ENCODE measurements at regions of chr10 and their contacts with region 1.

Region 1: DNA sequence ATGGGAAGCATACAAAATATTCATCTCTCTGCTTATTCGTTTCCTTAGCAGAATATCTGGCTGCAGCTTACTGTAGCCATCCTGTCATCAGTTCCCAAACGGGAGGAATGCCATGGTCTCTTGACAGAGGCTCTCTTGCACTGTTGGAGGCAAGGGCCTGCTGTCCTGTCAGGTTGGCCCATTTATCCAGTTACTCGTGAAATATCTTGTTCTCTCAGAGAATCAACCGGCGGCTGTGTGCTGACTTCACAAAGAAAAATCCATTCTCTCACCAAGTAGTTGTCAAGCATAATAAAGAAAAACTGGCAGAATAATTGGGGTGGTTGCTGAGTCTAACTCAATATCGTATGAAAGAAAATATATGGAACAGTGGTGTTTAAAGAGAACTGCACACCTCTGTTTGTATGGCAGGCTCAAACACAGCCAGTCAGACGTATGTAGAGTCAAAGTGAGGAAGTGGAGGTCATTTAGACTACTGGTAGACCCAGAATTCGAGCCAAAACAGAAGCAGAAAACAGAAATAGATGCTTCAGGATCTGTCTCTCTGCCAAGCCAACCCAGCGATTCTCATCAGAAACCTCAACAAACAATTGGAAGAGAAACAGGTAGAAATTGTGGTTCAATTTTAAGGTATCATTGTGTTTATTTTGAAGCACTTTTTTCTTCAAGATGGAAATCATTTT is 349.2 kb upstream of the PRKCQ start:
- DNase-seq: no peak
- H3K4me3 ChIP-seq: no peak overlapping the region
- H3K27ac ChIP-seq: no peak overlapping the region
- H3K4me1 ChIP-seq: no peaks in the 10 kb centered on the region
- H3K27me3 ChIP-seq: no peaks in the 10 kb centered on the region
- CTCF ChIP-seq: no peak
- POLR2A ChIP-seq: no peak

Region 2: GRCh38 chr10:6964543-6964942 is 35.3 kb after region 1 on chr10:
- intact Hi-C with region 1: loop called (anchors 2 kb)
- DNase-seq: no peak
- H3K4me3 ChIP-seq: no peak overlapping the region
- H3K27ac ChIP-seq: no peak overlapping the region
- H3K4me1 ChIP-seq: no peaks in the 10 kb centered on the region
- H3K27me3 ChIP-seq: no peaks in the 10 kb centered on the region
- CTCF ChIP-seq: no peak
- POLR2A ChIP-seq: no peak

Region 3: DNA sequence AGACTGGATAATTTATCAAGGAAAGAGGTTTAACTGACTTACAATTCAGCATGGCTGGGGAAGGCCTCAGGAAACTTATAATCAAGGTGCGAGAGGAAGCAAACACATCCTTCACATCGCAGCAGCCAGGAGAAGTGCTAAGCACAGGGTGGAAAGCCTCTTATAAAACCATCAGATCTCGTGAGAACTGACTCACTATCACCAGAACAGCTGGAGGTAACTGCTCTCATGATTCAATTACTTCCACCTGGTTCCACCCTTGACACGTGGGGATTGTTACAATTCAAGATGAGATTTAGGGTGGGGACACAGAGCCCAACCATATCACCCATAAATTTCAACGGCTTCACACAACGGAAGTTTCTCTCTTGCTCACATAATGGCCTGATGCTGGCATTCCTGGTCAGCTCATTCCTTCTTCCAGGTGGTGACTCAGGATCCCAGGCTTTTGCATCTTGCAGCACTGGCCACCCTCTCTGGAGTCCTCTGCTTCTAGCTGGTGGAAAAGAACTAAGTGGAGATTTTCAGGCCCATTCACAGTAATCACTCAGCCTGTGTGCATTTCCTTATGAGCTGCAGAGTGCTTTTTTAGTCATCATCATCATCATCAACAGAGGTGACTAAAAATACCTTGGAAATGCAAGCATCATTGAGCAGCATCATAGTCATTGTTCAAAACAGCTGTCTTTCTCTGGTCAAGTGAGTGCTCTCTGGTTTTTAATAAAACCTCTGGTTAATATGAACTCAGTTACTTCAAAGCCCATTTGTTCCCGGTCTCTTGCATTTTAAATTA is 173.5 kb after region 1 on chr10:
- intact Hi-C with region 1: no loop called
- DNase-seq: no peak
- H3K4me3 ChIP-seq: no peak overlapping the region
- H3K27ac ChIP-seq: no peak overlapping the region
- H3K4me1 ChIP-seq: no peaks in the 10 kb centered on the region
- H3K27me3 ChIP-seq: no peaks in the 10 kb centered on the region
- CTCF ChIP-seq: no peak
- POLR2A ChIP-seq: no peak

Region 4: DNA sequence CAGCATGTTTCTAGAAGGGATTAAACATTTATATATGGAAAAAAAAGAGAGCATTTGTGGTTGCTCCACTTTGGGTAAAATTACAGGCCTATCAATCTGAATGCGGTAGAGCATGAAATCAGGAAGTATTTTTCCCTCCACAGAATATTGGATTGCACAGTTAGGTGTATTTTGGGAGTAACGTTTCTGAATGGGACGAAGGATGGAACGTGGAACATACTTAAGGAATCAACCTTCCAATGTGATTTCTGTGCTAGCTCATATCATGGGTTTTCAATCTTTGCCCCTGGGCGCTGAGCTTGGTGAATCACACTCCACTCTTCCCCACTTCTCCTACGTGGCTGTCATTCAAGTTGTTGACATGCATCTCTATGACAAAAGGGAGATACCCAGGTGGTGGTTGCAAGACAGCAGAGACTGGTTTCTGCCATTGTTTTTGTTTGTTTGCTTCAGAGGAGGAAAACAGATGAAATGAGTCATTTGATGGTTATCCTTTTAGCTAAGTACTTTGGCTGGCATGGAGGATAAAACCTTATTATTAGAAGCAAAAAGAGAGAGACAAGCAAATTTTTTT is 1699.0 kb after region 1 on chr10:
- intact Hi-C with region 1: no loop called
- DNase-seq: no peak
- H3K4me3 ChIP-seq: no peak overlapping the region
- H3K27ac ChIP-seq: no peak overlapping the region
- H3K4me1 ChIP-seq: no peaks in the 10 kb centered on the region
- H3K27me3 ChIP-seq: no peaks in the 10 kb centered on the region
- CTCF ChIP-seq: no peak
- POLR2A ChIP-seq: no peak

Measured in vagina (tissue), 2 donors.